Caco-2 (cell line): ENCODE measurements at regions of chr5 and their contacts with region 1.

Region 1: DNA sequence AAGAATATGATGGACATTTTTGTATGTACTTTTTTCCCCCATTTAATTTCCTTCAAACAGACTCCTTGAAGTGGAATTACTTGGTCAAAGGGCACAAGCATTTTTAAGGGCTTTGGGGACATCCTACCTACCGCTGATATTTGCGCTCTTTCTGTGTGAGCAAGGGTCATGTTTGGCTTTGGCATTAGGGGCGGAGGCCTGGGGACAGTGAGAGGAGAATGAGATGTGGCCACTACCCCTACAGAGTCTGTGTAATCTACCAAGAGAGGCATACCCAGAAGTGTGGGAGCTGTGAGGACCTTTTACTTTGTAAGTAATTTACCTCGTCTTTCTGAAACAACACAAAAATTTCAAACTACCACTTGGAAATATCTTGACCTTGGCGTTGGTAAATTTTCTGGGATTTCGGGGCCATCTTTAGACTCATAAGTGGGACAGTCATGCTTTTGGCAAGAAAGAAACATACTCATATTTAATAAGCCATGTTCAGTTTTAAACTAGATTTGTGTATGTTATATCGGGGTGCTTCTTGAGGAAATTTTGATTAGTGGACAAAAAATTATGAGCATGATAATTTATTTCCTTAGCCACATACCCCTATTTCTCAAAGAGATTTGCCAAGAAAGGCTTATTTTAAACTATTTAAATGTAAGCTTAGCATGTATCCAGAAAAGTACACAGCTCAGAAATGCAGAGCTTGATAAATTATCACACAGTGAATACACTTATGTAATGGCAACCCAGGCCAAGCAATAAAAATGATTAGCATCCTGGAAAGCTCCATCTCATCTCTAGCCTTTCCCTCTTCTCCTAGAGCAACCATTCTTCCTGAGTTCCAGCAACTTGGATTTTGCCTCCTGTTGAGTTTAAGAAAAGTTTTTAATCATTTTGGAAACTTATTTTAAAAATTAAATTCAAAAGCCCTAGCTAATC is 63.6 kb downstream of the ARHGAP26 start:
- DNase-seq: peak; percentile 80 to 85
- H3K4me3 ChIP-seq: peak overlapping the region; percentile 22
- H3K4me3 Mint-ChIP-seq: peak overlapping the region; percentile 68
- H3K27ac Mint-ChIP-seq: peak overlapping the region; percentile 65
- H3K4me1 ChIP-seq: peaks cover 67% of the 10 kb centered on the region
- H3K4me1 Mint-ChIP-seq: peaks cover 61% of the 10 kb centered on the region
- H3K27me3 ChIP-seq: no peaks in the 10 kb centered on the region
- H3K27me3 Mint-ChIP-seq: no peaks in the 10 kb centered on the region
- CTCF ChIP-seq: no peak

Region 2: DNA sequence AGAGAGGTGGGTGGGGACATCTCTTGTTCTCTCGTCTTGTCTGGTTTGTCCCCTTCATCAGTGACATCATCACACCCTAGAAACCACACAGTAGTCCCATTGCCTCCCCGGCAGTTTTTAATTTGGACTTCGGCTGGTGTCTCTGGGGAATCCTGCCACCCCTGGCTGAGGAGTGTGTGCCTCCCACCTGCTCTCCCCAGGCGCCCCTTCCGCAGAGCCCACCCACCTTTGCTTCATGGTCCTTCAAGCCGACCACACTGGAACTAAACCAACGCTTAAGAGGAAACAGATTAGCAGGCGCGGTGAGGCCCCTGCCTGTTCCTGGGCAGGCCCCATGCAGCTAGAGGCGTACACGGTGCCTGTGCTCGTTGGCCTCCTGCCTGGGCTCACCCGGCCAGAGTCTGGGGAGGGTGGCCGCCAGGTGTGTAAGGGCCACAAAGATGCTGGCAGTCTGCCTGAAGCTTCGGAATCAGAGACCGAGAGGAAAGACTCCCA is 401.4 kb before region 1 on chr5:
- CTCF ChIA-PET with region 1: no interaction called
- POLR2A ChIA-PET with region 1: no interaction called
- intact Hi-C with region 1: no loop called
- DNase-seq: no peak
- H3K4me3 ChIP-seq: no peak overlapping the region
- H3K4me3 Mint-ChIP-seq: no peak overlapping the region
- H3K27ac Mint-ChIP-seq: no peak overlapping the region
- H3K4me1 ChIP-seq: 0 out of 2 replicates have a peak, but pooled peaks cover 5% of the 10 kb centered on the region
- H3K4me1 Mint-ChIP-seq: no peaks in the 10 kb centered on the region
- H3K27me3 ChIP-seq: no peaks in the 10 kb centered on the region
- H3K27me3 Mint-ChIP-seq: no peaks in the 10 kb centered on the region
- CTCF ChIP-seq: no peak

Region 3: DNA sequence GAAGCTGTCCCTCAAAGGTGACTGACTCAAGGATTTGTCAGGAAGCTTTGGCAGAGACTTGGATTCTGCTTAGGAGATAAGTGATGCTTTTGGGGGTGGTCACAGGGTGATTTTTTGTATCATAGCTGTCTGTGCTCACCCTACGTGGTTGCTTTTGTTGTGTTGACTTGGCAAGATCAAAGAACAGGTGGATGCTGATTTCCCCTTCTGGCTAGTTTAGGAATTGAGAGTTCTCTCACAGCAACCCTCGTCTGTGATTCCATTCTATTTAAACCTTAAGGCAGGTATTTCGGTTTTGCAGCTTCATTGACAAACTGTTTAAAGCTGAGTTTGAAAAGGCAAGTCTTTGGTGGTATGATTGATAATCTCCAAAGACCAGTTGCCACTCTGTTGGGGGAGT is 36.4 kb before region 1 on chr5:
- CTCF ChIA-PET with region 1: no interaction called
- POLR2A ChIA-PET with region 1: no interaction called
- intact Hi-C with region 1: loop called (anchors 1 kb)
- DNase-seq: no peak
- H3K4me3 ChIP-seq: no peak overlapping the region
- H3K4me3 Mint-ChIP-seq: peak overlapping the region; percentile 60
- H3K27ac Mint-ChIP-seq: peak overlapping the region; percentile 67
- H3K4me1 ChIP-seq: peaks cover 54% of the 10 kb centered on the region
- H3K4me1 Mint-ChIP-seq: peaks cover 59% of the 10 kb centered on the region
- H3K27me3 ChIP-seq: no peaks in the 10 kb centered on the region
- H3K27me3 Mint-ChIP-seq: no peaks in the 10 kb centered on the region
- CTCF ChIP-seq: peak; percentile 17 to 18

Region 4: DNA sequence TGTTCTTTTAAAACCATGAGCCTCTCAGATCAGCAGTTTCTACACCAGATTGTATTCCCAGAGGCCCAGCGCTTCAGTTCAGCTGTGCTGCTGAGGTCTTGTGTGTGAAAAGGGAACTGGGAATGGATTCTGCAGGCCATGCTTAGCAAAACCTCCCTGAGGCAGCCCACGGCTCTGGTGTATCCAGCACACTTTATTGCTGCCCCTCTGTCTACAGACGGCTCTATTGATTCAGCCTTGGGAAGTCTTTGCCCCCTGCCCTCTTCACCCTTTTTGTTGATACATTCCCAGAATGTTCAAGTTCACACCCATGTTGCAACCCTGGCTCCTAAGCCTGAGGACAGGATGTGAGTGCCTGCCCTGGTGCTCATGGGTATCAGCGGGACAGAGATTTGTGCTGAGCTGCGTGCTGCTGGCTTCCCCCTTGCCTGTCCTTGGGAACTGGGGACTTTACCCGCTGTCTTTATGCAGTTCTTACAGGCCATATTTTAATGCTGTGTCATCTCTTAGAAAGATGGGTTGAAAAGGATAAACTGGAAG is 26.3 kb before region 1 on chr5:
- CTCF ChIA-PET with region 1: no interaction called
- POLR2A ChIA-PET with region 1: no interaction called
- intact Hi-C with region 1: loop called (anchors 1 kb)
- DNase-seq: peak; percentile 16 to 44
- H3K4me3 ChIP-seq: no peak overlapping the region
- H3K4me3 Mint-ChIP-seq: no peak overlapping the region
- H3K27ac Mint-ChIP-seq: peak overlapping the region; percentile 32
- H3K4me1 ChIP-seq: peaks cover 33% of the 10 kb centered on the region
- H3K4me1 Mint-ChIP-seq: peaks cover 42% of the 10 kb centered on the region
- H3K27me3 ChIP-seq: no peaks in the 10 kb centered on the region
- H3K27me3 Mint-ChIP-seq: no peaks in the 10 kb centered on the region
- CTCF ChIP-seq: no peak

Region 5: GRCh38 chr5:142845402-142845921 is 11.7 kb after region 1 on chr5:
- CTCF ChIA-PET with region 1: no interaction called
- POLR2A ChIA-PET with region 1: interaction called, 3 read pairs
- intact Hi-C with region 1: loop called (anchors 1 kb)
- DNase-seq: no peak
- H3K4me3 ChIP-seq: no peak overlapping the region
- H3K4me3 Mint-ChIP-seq: no peak overlapping the region
- H3K27ac Mint-ChIP-seq: peak overlapping the region; percentile 77
- H3K4me1 ChIP-seq: peaks cover 25% of the 10 kb centered on the region
- H3K4me1 Mint-ChIP-seq: peaks cover 48% of the 10 kb centered on the region
- H3K27me3 ChIP-seq: no peaks in the 10 kb centered on the region
- H3K27me3 Mint-ChIP-seq: no peaks in the 10 kb centered on the region
- CTCF ChIP-seq: no peak

Region 6: GRCh38 chr5:142864725-142865260 is 31.0 kb after region 1 on chr5:
- CTCF ChIA-PET with region 1: no interaction called
- POLR2A ChIA-PET with region 1: no interaction called
- intact Hi-C with region 1: loop called (anchors 1 kb)
- DNase-seq: peak in 1 of 2 experiments; percentile 30
- H3K4me3 ChIP-seq: no peak overlapping the region
- H3K4me3 Mint-ChIP-seq: no peak overlapping the region
- H3K27ac Mint-ChIP-seq: peak overlapping the region; percentile 20
- H3K4me1 ChIP-seq: peaks cover 50% of the 10 kb centered on the region
- H3K4me1 Mint-ChIP-seq: peaks cover 39% of the 10 kb centered on the region
- H3K27me3 ChIP-seq: no peaks in the 10 kb centered on the region
- H3K27me3 Mint-ChIP-seq: no peaks in the 10 kb centered on the region
- CTCF ChIP-seq: no peak

Region 7: DNA sequence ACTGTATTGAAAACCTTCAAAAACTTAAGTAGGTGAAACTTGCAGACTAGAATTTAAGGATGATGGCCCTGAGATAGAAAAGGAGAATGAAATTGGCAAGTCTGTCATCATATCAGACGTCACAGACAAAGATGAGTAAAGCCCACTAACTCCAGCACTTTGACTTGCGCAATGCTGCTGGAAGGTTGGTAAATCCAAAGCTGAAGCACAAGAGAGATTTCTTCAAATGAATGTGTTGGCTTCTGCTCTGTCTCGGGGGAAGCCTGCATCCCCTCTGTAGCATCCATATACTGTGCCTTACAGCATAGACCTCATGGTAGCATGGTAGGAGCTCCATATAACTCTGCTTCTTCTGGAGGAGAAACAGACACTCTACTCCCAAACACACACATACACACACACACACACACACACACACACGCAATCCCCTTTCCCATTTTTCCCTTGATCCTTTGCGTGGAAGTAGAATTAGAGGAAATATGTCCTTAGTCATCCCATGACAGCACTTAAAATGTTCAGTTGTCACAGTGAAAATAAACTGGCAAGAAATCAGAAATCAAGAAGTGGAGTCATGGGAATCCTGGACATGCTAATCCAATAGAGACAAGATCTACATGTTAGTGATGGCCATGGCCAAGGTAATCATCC is 328.2 kb after region 1 on chr5:
- CTCF ChIA-PET with region 1: no interaction called
- POLR2A ChIA-PET with region 1: no interaction called
- intact Hi-C with region 1: no loop called
- DNase-seq: no peak
- H3K4me3 ChIP-seq: no peak overlapping the region
- H3K4me3 Mint-ChIP-seq: no peak overlapping the region
- H3K27ac Mint-ChIP-seq: no peak overlapping the region
- H3K4me1 ChIP-seq: peaks cover 11% of the 10 kb centered on the region
- H3K4me1 Mint-ChIP-seq: peaks cover 11% of the 10 kb centered on the region
- H3K27me3 ChIP-seq: no peaks in the 10 kb centered on the region
- H3K27me3 Mint-ChIP-seq: no peaks in the 10 kb centered on the region
- CTCF ChIP-seq: no peak